ENCODE measurements at regions of chr11 and their contacts with region 1.

Region 1: GRCh38 chr11:65506770-65507505 is 8.1 kb downstream of the MALAT1 start:
- DNase-seq: no peak

Region 2: GRCh38 chr11:65448418-65449105 is 58.4 kb before region 1 on chr11:
- CTCF ChIA-PET with region 1: no interaction called
- POLR2A ChIA-PET with region 1: interaction called, 20 read pairs
- DNase-seq: no peak

Region 3: GRCh38 chr11:65471410-65471762 is 35.6 kb before region 1 on chr11:
- CTCF ChIA-PET with region 1: interaction called, 17 read pairs
- POLR2A ChIA-PET with region 1: interaction called, 1,783 read pairs
- DNase-seq: no peak

Region 4: GRCh38 chr11:65477149-65477965 is 29.6 kb before region 1 on chr11:
- CTCF ChIA-PET with region 1: interaction called, 11 read pairs
- POLR2A ChIA-PET with region 1: interaction called, 1,783 read pairs
- DNase-seq: peak; percentile 91

Measured in HEK293T (cell line).